Activated T-helper 2 cell treated with anti-CD3 and anti-CD28 coated beads, Interferon-gamma antibody, Interleukin-2, Interleukin-4, amounts not matched to agents 10 μg/mL and 5 μg/mL and 100 μg/mL, durations not matched to agents 14 hours and 24 hours and 36 hours (primary cell): ENCODE measurements at regions of chr11 and their contacts with region 1.

Region 1: DNA sequence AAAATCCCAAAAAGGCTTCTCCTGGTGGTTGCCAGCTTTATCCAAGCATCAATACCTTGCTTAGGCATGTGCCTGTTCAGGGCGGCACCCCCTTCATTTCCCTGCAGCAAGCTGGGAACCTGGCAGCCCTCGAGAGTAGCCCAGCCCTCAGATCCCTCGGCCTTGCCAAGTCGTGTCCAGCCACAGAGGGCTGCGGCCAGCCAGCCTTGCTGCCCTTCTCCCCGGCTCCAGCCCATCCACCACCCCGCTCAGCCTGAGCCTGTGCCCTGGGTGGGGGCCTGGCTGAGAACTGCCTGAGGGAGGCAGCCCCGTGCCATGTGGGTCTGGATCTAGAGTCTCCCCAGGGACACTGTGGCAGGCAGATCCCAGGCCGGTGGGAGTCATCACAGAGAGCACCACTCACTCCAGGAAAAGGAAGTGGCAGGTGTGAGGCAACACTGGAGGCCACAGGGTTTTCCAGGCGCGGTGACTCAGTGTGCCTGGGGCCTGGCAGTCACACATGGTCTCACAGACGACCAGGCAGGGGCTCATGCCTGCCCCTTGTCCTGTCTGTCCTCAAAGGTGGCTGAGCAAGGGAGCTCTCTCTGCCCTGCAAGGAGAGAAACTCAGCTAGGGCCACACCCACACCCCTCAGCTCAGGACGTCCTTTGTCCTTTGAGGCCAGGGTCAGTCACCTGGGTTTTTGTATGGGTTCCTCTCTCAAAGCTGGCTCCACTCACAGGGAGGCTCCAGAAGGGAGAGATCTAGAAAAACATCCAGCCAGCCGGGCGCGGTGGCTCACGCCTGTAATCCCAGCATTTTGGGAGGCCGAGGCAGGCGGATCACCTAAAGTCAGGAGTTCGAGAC is 12.2 kb upstream of the CDC42BPG start:
- DNase-seq: no peak
- H3K4me3 Mint-ChIP-seq: peak overlapping the region; percentile 18
- H3K27ac Mint-ChIP-seq: peak overlapping the region; percentile 77
- H3K4me1 Mint-ChIP-seq: peaks cover 73% of the 10 kb centered on the region
- H3K27me3 Mint-ChIP-seq: no peaks in the 10 kb centered on the region

Region 2: GRCh38 chr11:64386306-64386702 is 470.3 kb before region 1 on chr11:
- intact Hi-C with region 1: no loop called
- DNase-seq: peak; percentile 27
- H3K4me3 Mint-ChIP-seq: no peak overlapping the region
- H3K27ac Mint-ChIP-seq: no peak overlapping the region
- H3K4me1 Mint-ChIP-seq: peaks cover 25% of the 10 kb centered on the region
- H3K27me3 Mint-ChIP-seq: peaks cover 17% of the 10 kb centered on the region

Region 3: GRCh38 chr11:64810271-64810890 is 46.2 kb before region 1 on chr11 and contains the start of gene MEN1:
- intact Hi-C with region 1: loop called (anchors 2 kb)
- DNase-seq: peak; percentile 77
- H3K4me3 Mint-ChIP-seq: peak within 1 kb of the TSS; percentile 98
- H3K27ac Mint-ChIP-seq: peak within 1 kb of the TSS; percentile 94
- H3K4me1 Mint-ChIP-seq: peaks cover 22% of the 10 kb centered on the region
- H3K27me3 Mint-ChIP-seq: no peaks in the 10 kb centered on the region
- total RNA-seq, gene MEN1: 46.2 and 47.2 TPM in 2 replicates